Left colon (tissue), 2 donors: ENCODE measurements at regions of chr2 and their contacts with region 1.

Region 1: GRCh38 chr2:43131024-43131889 is 95.1 kb downstream of the ZFP36L2 start:
- DNase-seq: peak; percentile 86 to 97
- ATAC-seq: peak; percentile 67

Region 2: GRCh38 chr2:41657226-41657625 is 1474.0 kb before region 1 on chr2:
- intact Hi-C with region 1: no loop called
- DNase-seq: no peak
- ATAC-seq: no peak

Region 3: GRCh38 chr2:42545821-42546390 is 585.4 kb before region 1 on chr2:
- intact Hi-C with region 1: no loop called
- DNase-seq: no peak
- ATAC-seq: no peak

Region 4: DNA sequence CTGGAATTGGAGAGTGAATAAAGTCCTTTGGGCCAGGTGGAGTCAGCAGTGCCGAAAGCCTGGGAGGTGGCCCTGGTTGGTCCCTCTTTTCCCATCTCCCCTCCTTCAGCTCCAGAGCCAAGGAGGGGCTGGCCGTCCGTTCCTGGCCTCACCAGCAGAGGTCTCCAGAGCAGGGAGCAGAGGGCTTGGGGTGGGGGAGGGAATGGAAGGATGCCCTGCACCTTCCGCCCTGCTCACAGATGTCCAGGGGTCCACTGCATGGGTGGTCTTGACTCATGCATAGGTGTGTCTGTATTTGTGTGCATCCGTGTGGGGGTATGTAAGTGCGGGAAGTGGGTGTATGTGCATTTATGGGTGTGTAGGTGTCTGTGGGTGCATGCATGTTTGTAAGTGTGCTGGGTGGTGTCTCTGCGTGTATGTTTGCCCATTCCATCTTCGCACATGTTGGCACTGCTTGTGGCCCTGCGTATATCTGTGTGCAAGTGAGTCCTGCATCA is 106.7 kb before region 1 on chr2:
- intact Hi-C with region 1: no loop called
- DNase-seq: peak; percentile 73 to 85
- ATAC-seq: peak; percentile 68

Region 5: DNA sequence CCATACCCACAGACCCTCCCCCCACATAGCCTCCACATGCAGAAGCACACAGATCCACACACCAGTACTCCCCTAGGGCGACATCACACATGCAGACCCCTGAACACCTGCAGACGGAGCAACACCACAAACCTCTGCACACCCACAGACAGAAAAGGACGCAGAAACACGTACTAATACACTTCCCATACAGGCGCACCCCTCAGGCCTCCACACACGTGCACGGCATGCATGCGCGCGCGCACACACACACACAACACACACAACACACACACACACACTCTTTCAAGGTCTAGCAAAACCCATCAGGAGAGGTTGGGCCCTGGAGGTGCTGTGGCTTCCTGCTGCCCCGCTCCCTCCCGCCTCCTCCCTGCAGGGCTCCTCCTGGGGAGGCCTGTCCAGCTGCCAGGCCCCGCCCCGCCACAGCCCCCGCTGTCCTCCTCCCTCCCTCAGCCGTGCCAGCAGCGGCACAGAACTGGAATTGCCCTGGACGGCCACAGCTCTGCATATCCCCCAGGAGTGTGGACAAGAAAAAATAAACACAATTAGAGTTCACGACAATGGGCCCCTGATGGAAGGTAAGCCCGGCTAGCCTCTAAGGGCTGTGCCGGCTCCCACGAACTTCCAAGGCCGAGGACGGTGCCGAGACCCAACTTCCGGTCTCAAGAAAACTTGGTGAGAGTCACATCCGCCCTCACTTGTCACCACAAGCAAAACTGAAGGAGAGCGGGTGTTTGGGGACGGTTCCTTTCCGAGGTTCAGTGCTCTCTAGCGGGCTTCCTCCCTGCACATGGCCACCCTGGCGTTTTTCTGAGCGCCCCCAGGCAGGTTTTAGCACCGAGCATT is 88.3 kb after region 1 on chr2:
- intact Hi-C with region 1: loop called (anchors 10 kb)
- DNase-seq: peak; percentile 93 to 97
- ATAC-seq: peak; percentile 68